ENCODE measurements at regions of chr3 and their contacts with region 1.

Region 1: GRCh38 chr3:29065211-29065785 is 215.6 kb upstream of the RBMS3 start:
- DNase-seq: no peak
- ATAC-seq: no peak
- H3K4me3 ChIP-seq: no peak overlapping the region
- H3K4me3 Mint-ChIP-seq: no peak overlapping the region
- H3K27ac ChIP-seq: no peak overlapping the region
- H3K27ac Mint-ChIP-seq: no peak overlapping the region
- H3K4me1 ChIP-seq: no peaks in the 10 kb centered on the region
- H3K4me1 Mint-ChIP-seq: no peaks in the 10 kb centered on the region
- H3K27me3 ChIP-seq: no peaks in the 10 kb centered on the region
- H3K27me3 Mint-ChIP-seq: no peaks in the 10 kb centered on the region

Region 2: GRCh38 chr3:28940530-28940929 is 124.8 kb before region 1 on chr3:
- CTCF ChIA-PET with region 1: no interaction called
- POLR2A ChIA-PET with region 1: interaction called in 1 of 2 experiments, 10 read pairs
- DNase-seq: no peak
- ATAC-seq: no peak
- H3K4me3 ChIP-seq: no peak overlapping the region
- H3K4me3 Mint-ChIP-seq: no peak overlapping the region
- H3K27ac ChIP-seq: no peak overlapping the region
- H3K27ac Mint-ChIP-seq: no peak overlapping the region
- H3K4me1 ChIP-seq: peaks cover 0 to 3% of the 10 kb centered on the region in 2 experiments
- H3K4me1 Mint-ChIP-seq: peaks cover 0 to 2% (median 0%) of the 10 kb centered on the region in 3 donors
- H3K27me3 ChIP-seq: no peaks in the 10 kb centered on the region
- H3K27me3 Mint-ChIP-seq: no peaks in the 10 kb centered on the region

Region 3: DNA sequence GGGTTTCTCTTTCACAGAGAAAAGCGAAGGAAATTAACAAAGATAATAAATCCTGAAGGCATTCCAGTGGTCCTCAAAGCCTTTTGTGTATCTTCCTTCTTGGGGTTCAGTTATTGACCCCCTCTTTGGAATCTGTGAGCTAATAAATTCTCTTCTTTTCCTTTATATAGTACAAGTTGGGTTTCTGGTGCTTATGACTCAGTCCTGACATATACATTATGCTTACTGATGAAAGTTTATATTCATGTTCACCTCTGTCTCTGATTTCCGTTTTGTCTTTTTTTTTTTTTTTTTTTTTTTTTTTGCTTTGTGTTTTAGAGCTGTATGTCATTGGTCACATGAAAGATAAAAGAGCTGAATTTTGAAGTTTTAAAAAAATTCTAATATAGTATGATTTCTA is 15.1 kb before region 1 on chr3:
- CTCF ChIA-PET with region 1: no interaction called
- POLR2A ChIA-PET with region 1: no interaction called
- DNase-seq: no peak
- ATAC-seq: no peak
- H3K4me3 ChIP-seq: no peak overlapping the region
- H3K4me3 Mint-ChIP-seq: no peak overlapping the region
- H3K27ac ChIP-seq: no peak overlapping the region
- H3K27ac Mint-ChIP-seq: no peak overlapping the region
- H3K4me1 ChIP-seq: no peaks in the 10 kb centered on the region
- H3K4me1 Mint-ChIP-seq: no peaks in the 10 kb centered on the region
- H3K27me3 ChIP-seq: no peaks in the 10 kb centered on the region
- H3K27me3 Mint-ChIP-seq: peaks cover 0 to 6% of the 10 kb centered on the region in 2 donors